ENCODE measurements at regions of chr7 and their contacts with region 1.

Region 1: GRCh38 chr7:118496138-118496644 is 271.7 kb downstream of the ANKRD7 start:
- H3K4me3 ChIP-seq: no peak overlapping the region
- H3K27ac ChIP-seq: no peak overlapping the region
- H3K4me1 ChIP-seq: no peaks in the 10 kb centered on the region
- CTCF ChIP-seq: no peak

Region 2: GRCh38 chr7:119037941-119038340 is 541.8 kb after region 1 on chr7:
- CTCF ChIA-PET with region 1: no interaction called
- POLR2A ChIA-PET with region 1: interaction called, 10 read pairs
- H3K4me3 ChIP-seq: no peak overlapping the region
- H3K27ac ChIP-seq: no peak overlapping the region
- H3K4me1 ChIP-seq: no peaks in the 10 kb centered on the region
- CTCF ChIP-seq: no peak